IMR-90 (cell line): ENCODE measurements at regions of chr17 and their contacts with region 1.

Region 1: DNA sequence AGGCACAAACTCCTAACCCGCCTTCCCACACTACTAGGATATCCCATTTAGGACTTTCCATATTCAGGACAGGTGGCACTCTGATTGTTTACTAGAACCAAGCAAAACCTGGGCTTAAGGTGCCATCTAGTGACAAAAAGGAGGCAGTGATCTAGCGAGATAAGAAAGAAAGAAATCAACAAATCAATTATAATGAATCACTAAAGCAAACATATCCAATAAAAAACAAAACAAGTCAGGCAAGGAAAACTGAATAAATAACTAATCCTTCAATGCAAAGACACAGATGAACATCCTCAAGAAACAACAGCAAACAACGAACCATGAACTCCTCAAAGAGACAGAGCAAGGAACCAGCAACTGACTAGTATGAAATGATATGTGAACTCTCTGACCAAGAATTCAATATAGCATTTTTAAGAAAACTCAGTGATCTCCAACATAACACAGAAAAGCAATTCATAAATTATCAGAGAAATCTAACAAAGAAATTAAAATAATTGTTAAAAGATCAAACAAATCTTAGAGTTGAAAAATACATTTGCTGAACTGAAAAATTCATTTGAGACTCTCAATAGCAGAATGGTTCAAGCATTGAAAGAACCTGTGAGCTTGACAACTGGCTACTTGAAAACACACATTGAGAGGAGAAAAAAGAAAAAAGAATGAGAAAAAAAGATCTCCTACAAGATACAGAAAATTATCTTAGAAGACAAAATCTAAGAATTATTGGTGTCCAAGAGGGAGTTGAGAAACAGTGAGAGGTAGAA is 203.7 kb downstream of the CEP112 start:
- DNase-seq: peak; percentile 48
- ATAC-seq: no peak
- H3K4me3 ChIP-seq: no peak overlapping the region
- H3K27ac ChIP-seq: no peak overlapping the region
- H3K4me1 ChIP-seq: no peaks in the 10 kb centered on the region
- H3K27me3 ChIP-seq: no peaks in the 10 kb centered on the region
- CTCF ChIP-seq: peak; percentile 64
- POLR2A ChIP-seq: no peak
- RAD21 ChIP-seq: peak; percentile 85

Region 2: GRCh38 chr17:65278050-65278819 is 710.0 kb before region 1 on chr17:
- CTCF ChIA-PET with region 1: no interaction called
- POLR2A ChIA-PET with region 1: no interaction called
- dilution Hi-C with region 1: no loop called
- in situ Hi-C with region 1: no loop called
- intact Hi-C with region 1: loop called (anchors 5 kb)
- DNase-seq: peak; percentile 62
- ATAC-seq: peak; percentile 97
- H3K4me3 ChIP-seq: no peak overlapping the region
- H3K27ac ChIP-seq: no peak overlapping the region
- H3K4me1 ChIP-seq: peaks cover 3% of the 10 kb centered on the region; the same call in 1 of the 2 replicates
- H3K27me3 ChIP-seq: peaks cover 4% of the 10 kb centered on the region
- CTCF ChIP-seq: peak; percentile 72
- POLR2A ChIP-seq: no peak
- RAD21 ChIP-seq: peak; percentile 84

Region 3: DNA sequence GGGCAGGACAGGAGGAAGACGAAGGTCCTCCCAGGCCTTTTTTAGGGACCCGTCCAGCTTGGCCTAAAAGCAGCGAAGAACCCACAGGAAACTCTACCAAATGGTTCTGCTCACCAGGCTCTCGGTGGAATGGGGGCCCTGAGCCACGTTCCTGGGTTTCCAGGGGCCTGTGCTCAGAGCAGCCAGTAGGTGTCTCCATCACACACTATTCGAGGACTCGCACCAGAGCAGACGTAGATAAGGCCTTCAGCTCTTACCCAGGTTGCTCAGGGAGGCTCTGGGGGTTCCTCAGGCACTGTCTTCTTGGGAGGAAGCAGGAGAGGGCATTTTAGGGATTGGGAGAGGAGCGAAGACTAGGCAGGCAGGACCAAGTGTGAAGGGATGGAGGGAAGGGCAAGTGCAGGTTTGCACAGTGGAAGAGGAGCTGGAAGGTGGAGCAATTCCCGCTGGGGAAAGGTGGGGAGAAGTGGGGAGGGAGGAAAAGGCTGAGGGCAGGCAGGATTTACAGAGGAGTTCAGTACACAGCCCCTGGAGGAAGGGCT is 694.0 kb before region 1 on chr17:
- CTCF ChIA-PET with region 1: interaction called, 5 read pairs
- POLR2A ChIA-PET with region 1: no interaction called
- dilution Hi-C with region 1: no loop called
- in situ Hi-C with region 1: no loop called
- intact Hi-C with region 1: loop called (anchors 1 kb)
- DNase-seq: peak; percentile 71
- ATAC-seq: peak; percentile 99
- H3K4me3 ChIP-seq: no peak overlapping the region
- H3K27ac ChIP-seq: no peak overlapping the region
- H3K4me1 ChIP-seq: no peaks in the 10 kb centered on the region
- H3K27me3 ChIP-seq: no peaks in the 10 kb centered on the region; the same call in none of the 2 replicates
- CTCF ChIP-seq: peak; percentile 83
- POLR2A ChIP-seq: no peak
- RAD21 ChIP-seq: peak; percentile 85

Region 4: GRCh38 chr17:65455972-65456343 is 532.3 kb before region 1 on chr17:
- CTCF ChIA-PET with region 1: no interaction called
- POLR2A ChIA-PET with region 1: no interaction called
- dilution Hi-C with region 1: no loop called
- in situ Hi-C with region 1: no loop called
- intact Hi-C with region 1: loop called (anchors 1 kb)
- DNase-seq: peak; percentile 1
- ATAC-seq: peak; percentile 70
- H3K4me3 ChIP-seq: no peak overlapping the region
- H3K27ac ChIP-seq: no peak overlapping the region
- H3K4me1 ChIP-seq: no peaks in the 10 kb centered on the region
- H3K27me3 ChIP-seq: peaks cover 15% of the 10 kb centered on the region
- CTCF ChIP-seq: peak; percentile 44
- POLR2A ChIP-seq: no peak
- RAD21 ChIP-seq: peak; percentile 44

Region 5: GRCh38 chr17:65914784-65915350 is 73.4 kb before region 1 on chr17:
- CTCF ChIA-PET with region 1: no interaction called
- POLR2A ChIA-PET with region 1: no interaction called
- dilution Hi-C with region 1: no loop called
- in situ Hi-C with region 1: no loop called
- intact Hi-C with region 1: no loop called
- DNase-seq: no peak
- ATAC-seq: no peak
- H3K4me3 ChIP-seq: no peak overlapping the region
- H3K27ac ChIP-seq: no peak overlapping the region
- H3K4me1 ChIP-seq: no peaks in the 10 kb centered on the region
- H3K27me3 ChIP-seq: no peaks in the 10 kb centered on the region
- CTCF ChIP-seq: no peak
- POLR2A ChIP-seq: no peak
- RAD21 ChIP-seq: no peak